Ascending aorta (tissue), 2 donors: ENCODE measurements at regions of chr13 and their contacts with region 1.

Region 1: GRCh38 chr13:93227878-93228642 is 1.5 kb downstream of the GPC6 start:
- DNase-seq: peak in 1 of 2 donors; percentile 81
- H3K4me3 ChIP-seq: peak overlapping the region; percentile 69 to 74
- H3K27ac ChIP-seq: peak overlapping the region; percentile 58 to 95
- H3K4me1 ChIP-seq: peaks cover 0 to 11% of the 10 kb centered on the region in 2 donors
- H3K27me3 ChIP-seq: no peaks in the 10 kb centered on the region
- CTCF ChIP-seq: peak in 2 of 3 experiments; percentile 32 to 69

Region 2: DNA sequence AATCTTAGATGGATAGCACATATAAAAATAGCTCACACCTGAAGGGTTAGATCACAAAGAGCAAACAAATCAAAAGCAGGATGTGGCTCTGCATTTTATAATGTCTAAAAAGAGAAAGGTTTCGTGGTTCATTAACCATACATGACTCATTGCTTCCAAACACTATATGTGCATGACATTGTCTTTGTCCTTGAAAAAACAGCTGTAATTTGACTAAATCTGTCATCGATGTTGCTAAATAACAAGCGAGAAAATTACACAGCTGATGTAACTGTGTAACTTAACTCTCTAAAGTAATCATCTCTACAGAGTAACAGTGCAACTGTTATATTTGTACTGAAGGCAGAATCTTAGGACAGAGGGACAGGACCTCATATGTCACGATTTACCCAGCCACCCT is 384.5 kb before region 1 on chr13:
- intact Hi-C with region 1: loop called (anchors 5 kb)
- DNase-seq: no peak
- H3K4me3 ChIP-seq: no peak overlapping the region
- H3K27ac ChIP-seq: no peak overlapping the region
- H3K4me1 ChIP-seq: peaks cover 0 to 20% of the 10 kb centered on the region in 2 donors
- H3K27me3 ChIP-seq: no peaks in the 10 kb centered on the region
- CTCF ChIP-seq: no peak

Region 3: GRCh38 chr13:93775507-93776108 is 547.5 kb after region 1 on chr13:
- intact Hi-C with region 1: loop called (anchors 5 kb)
- DNase-seq: no peak
- H3K4me3 ChIP-seq: no peak overlapping the region
- H3K27ac ChIP-seq: peak overlapping the region in 1 of 2 donors; percentile 66
- H3K4me1 ChIP-seq: peaks cover 0 to 17% of the 10 kb centered on the region in 2 donors
- H3K27me3 ChIP-seq: no peaks in the 10 kb centered on the region
- CTCF ChIP-seq: no peak

Region 4: DNA sequence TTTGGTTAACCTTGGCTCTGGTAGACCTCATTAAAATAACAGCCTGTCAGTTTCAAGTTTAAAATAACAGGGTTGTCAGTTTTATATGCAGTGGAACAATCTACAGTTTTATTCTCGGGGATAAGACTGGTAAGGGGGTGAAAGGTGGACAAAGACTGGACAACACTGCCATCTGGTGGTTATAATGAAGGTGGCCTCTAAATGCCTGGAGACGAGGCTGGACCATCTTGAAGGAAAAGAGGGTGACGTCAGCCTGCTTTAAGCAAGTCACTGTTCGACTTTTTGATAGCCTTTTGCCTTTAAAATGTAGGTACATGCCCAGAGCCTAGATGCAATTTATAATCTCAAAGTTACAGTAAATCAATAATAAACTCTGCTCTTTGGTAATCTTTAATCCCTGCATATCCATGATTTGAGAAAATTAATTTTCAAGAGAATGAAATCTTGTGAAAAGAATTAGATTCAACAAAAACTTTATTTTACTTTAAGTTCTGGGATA is 1134.4 kb after region 1 on chr13:
- intact Hi-C with region 1: loop called (anchors 5 kb)
- DNase-seq: peak in 1 of 2 donors; percentile 78
- H3K4me3 ChIP-seq: no peak overlapping the region
- H3K27ac ChIP-seq: no peak overlapping the region
- H3K4me1 ChIP-seq: peaks cover 0 to 5% of the 10 kb centered on the region in 2 donors
- H3K27me3 ChIP-seq: no peaks in the 10 kb centered on the region
- CTCF ChIP-seq: peak; percentile 62 to 79 (median 70)

Region 5: DNA sequence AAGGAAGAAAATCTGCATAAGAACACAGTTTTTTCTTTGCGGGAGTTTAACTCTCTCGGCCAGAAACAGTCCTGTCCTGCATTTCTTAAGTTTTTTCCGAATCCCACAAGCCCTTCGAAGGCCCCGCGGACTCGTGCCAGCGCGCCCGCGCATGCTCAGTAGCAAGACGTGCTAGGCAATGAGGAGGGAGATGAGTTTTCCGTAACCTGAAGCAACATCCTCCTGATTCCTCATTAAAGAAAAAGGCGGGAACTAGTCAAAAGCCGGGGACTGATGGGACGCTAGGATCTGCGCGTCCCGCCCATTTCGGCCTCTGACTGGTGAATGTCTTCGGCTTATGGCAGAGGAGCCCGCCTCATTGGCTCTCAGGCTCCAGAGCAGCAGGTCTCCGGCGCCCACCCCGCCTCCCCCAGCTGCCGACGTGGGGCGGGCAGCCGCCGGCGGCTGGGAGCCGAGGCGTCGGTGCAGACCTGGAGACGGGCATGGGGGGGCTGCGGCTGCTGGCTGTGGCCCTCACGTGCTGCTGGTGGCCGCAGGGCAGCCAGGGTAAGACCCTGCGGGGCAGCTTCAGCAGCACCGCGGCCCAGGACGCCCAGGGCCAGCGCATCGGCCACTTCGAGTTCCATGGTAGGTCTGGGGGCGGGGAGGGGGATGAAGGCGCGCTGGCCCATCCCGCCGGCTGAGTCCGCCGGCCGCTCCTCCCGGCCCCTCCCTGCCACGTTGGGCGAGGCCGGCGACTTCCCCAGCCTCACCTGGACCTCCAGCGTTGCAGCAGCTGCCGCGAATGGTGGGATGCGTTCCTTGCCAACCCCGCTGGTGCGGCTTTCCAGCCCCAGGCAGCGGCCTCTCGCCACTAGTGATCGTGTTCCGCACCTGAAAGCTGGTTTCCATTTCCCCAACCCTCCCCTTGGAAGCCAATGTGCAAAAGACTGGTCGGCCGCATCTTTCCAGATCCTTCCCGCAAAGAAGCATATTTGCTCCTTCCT is 1373.7 kb after region 1 on chr13 and contains the start of gene GPR180:
- intact Hi-C with region 1: loop called (anchors 5 kb)
- DNase-seq: peak; percentile 94 to 99
- H3K4me3 ChIP-seq: peak within 1 kb of the TSS; percentile 90 to 92
- H3K27ac ChIP-seq: peak within 1 kb of the TSS; percentile 84 to 89
- H3K4me1 ChIP-seq: peaks cover 0 to 3% of the 10 kb centered on the region in 2 donors
- H3K27me3 ChIP-seq: no peaks in the 10 kb centered on the region
- CTCF ChIP-seq: no peak
- total RNA-seq, gene GPR180: 2.3 TPM